Activated CD4-positive, alpha-beta memory T cell treated with anti-CD3 and anti-CD28 coated beads for 36 hours (primary cell): ENCODE measurements at regions of chr5 and their contacts with region 1.

Region 1: DNA sequence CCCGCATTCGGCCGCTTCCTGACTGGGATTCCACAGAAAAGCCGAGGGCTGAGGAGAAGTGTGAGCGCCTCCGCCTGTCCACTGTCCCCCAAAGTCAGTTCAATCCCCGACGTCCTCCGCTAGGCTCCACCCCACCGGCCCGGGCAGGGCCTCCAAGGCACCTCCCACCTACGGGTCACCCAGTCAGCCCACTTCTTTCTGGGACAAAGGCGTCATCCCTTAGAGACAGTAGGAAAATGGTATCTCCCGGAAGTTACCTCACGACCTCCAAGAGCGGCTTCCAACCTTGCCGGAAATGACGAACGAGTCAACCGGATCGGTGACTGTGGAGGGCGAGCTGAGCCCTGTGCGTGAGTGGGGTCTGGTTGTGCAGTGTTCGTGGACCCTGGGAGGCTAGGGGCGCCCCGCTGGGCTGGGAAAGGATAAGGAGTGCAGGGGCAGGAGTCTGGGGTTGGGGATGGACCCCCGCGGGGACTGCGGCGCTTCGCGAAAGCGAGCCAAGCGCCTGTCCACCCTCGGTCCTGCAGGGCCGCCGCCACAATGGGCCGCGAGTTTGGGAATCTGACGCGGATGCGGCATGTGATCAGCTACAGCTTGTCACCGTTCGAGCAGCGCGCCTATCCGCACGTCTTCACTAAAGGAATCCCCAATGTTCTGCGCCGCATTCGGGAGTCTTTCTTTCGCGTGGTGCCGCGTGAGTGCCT is at the starts of genes GDF9 and UQCRQ:
- DNase-seq: peak; percentile 95
- H3K4me3 Mint-ChIP-seq: peak within 1 kb of the TSS; percentile 100
- H3K27ac Mint-ChIP-seq: peak within 1 kb of the TSS; percentile 99
- H3K4me1 Mint-ChIP-seq: peaks cover 28% of the 10 kb centered on the region
- H3K27me3 Mint-ChIP-seq: no peaks in the 10 kb centered on the region
- total RNA-seq, gene GDF9: 0.43 to 0.73 TPM
- total RNA-seq, gene UQCRQ: 540 to 565 TPM

Region 2: DNA sequence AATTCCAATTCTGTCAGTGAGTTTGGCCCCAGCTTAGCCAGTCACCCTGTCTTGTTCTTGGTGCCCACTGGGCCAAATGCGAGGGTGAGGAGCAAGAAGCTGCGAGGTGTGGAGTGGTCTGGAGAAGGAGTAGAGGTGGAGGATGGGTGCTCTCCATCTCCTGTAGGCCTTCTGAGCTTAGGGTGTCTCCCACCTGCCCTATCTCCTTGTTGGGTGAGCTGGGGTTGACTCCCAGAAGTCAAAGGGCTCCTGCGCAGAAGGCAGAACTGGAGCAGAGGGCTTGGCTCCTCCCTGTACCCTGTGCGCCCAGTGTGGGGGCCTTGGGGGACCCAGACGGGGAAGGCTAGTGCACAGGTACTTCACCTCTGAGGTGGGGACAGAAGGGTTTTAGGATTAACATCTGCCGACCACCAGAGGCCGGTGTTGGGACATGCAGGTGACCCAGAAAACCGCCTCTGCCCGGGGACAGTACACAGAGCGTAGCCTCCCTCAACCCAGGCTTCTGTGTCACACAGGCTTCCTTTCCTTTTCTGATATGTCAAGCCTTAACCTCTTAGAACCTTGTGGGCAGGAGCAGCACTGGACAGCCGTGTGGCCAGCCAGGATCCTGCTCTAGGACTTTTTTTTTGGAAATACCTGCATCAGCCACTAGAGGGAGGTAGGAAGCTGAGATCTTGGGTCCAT is 340.1 kb before region 1 on chr5:
- CTCF ChIA-PET with region 1: interaction called, 5 read pairs
- POLR2A ChIA-PET with region 1: no interaction called
- intact Hi-C with region 1: loop called (anchors 5 kb)
- DNase-seq: peak; percentile 48
- H3K4me3 Mint-ChIP-seq: no peak overlapping the region
- H3K27ac Mint-ChIP-seq: no peak overlapping the region
- H3K4me1 Mint-ChIP-seq: peaks cover 38% of the 10 kb centered on the region
- H3K27me3 Mint-ChIP-seq: peaks cover 2% of the 10 kb centered on the region

Region 3: GRCh38 chr5:132777209-132778069 is 89.1 kb before region 1 on chr5 and contains the start of gene SEPTIN8:
- CTCF ChIA-PET with region 1: no interaction called
- POLR2A ChIA-PET with region 1: no interaction called
- intact Hi-C with region 1: loop called (anchors 1 kb)
- DNase-seq: peak; percentile 62
- H3K4me3 Mint-ChIP-seq: peak within 1 kb of the TSS; percentile 68
- H3K27ac Mint-ChIP-seq: no peak within 1 kb of the TSS
- H3K4me1 Mint-ChIP-seq: peaks cover 2% of the 10 kb centered on the region
- H3K27me3 Mint-ChIP-seq: peaks cover 13% of the 10 kb centered on the region
- total RNA-seq, gene SEPTIN8: 31.1 to 32.8 TPM

Region 4: DNA sequence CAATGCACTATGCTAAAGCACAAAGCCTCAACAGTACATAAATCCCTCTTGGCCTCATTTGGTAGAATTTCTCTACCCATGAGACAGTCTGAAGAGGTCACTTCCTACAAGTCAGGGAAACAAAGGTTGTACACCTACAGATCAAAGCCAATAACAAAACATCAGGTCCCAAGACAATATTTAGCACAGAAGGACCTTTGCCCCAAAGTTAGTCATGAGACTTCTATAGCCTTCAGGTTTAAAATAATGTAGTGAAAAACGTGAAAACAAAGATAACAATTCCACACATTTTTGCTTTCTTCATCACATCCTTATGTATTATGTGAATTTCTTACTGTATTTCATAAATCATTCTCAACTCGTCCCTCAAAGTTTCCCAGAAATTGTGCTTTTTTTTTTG is 81.2 kb after region 1 on chr5:
- CTCF ChIA-PET with region 1: no interaction called
- POLR2A ChIA-PET with region 1: no interaction called
- intact Hi-C with region 1: no loop called
- DNase-seq: no peak
- H3K4me3 Mint-ChIP-seq: no peak overlapping the region
- H3K27ac Mint-ChIP-seq: no peak overlapping the region
- H3K4me1 Mint-ChIP-seq: peaks cover 46% of the 10 kb centered on the region
- H3K27me3 Mint-ChIP-seq: no peaks in the 10 kb centered on the region

Region 5: DNA sequence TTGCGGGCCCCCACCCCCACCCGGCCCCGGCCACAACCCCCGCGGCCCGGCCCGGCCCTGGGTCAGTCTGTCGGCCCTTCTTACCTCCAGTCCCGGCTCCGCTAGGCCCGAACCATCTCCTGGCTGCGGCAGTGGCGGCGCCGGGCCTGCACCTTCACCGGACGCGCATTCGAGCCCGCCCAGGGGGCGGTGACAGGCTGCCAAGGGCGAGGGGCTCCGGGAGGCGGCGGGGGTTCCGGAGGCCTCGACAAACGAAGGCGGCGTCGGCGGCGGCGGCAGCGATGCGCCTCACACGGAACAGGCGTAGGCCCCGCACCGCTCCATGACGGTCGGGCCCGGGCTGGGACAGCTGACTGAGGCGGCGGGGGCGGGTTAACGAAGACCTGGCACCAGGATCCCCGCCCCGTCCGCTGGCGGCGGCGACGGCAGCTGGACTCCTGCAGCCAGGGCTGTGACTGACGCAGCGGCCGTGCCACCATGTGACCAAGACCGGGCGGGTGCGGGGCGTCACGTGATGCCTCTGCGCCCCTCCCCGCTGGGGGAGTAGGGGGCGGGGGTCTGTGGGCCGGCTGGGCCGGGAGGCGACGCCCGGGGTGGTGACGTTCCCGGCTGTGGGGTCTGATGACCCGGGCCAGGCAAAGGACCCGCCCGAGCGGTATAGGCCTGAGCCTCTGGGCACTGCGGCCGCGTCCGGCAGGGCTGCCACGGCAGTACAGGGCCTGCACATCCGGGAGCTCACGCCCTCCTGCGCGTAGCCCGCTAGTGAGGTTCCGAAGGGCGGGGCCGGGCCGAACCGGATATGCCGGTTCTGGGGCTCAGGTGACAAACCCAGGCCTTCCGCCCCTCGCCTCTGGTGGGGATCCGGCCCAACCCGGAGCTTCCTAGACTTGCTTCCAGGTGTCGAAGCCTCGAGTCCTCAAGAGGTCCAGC is 96.9 kb after region 1 on chr5 and contains the start of gene AFF4:
- CTCF ChIA-PET with region 1: no interaction called
- POLR2A ChIA-PET with region 1: interaction called, 8 read pairs
- intact Hi-C with region 1: loop called (anchors 1 kb)
- DNase-seq: peak; percentile 93
- H3K4me3 Mint-ChIP-seq: peak within 1 kb of the TSS; percentile 93
- H3K27ac Mint-ChIP-seq: peak within 1 kb of the TSS; percentile 98
- H3K4me1 Mint-ChIP-seq: peaks cover 29% of the 10 kb centered on the region
- H3K27me3 Mint-ChIP-seq: no peaks in the 10 kb centered on the region
- total RNA-seq, gene AFF4: 21.9 to 22.1 TPM

Region 6: DNA sequence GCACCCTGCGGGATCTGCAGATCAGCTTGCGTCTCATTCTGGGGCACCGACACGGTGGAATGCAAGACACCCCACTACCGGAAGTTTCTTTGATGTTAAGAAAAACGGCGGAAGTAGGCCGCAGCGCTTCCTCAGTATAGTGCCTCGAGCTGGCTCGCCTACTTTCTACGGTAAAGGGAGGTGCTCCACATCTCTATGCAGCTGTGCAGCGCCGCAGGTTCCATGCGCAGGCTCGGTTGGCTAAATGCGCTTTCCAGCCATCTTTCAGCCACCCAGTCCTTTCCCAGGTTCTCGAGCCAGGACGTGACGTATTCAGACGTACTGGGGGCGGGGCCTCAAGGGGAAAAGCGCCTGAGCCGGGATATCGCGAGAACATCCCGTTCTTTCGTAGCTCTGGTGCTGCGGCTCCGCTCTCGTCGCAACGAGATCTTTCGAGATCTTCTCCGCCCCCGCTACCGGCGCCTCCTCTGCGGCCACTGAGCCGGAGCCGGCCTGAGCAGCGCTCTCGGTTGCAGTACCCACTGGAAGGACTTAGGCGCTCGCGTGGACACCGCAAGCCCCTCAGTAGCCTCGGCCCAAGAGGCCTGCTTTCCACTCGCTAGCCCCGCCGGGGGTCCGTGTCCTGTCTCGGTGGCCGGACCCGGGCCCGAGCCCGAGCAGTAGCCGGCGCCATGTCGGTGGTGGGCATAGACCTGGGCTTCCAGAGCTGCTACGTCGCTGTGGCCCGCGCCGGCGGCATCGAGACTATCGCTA is 185.3 kb after region 1 on chr5 and contains the start of gene HSPA4:
- CTCF ChIA-PET with region 1: no interaction called
- POLR2A ChIA-PET with region 1: no interaction called
- intact Hi-C with region 1: loop called (anchors 1 kb)
- DNase-seq: peak; percentile 99
- H3K4me3 Mint-ChIP-seq: peak within 1 kb of the TSS; percentile 89
- H3K27ac Mint-ChIP-seq: peak within 1 kb of the TSS; percentile 96
- H3K4me1 Mint-ChIP-seq: peaks cover 39% of the 10 kb centered on the region
- H3K27me3 Mint-ChIP-seq: no peaks in the 10 kb centered on the region
- total RNA-seq, gene HSPA4: 221 to 236 TPM

Region 7: DNA sequence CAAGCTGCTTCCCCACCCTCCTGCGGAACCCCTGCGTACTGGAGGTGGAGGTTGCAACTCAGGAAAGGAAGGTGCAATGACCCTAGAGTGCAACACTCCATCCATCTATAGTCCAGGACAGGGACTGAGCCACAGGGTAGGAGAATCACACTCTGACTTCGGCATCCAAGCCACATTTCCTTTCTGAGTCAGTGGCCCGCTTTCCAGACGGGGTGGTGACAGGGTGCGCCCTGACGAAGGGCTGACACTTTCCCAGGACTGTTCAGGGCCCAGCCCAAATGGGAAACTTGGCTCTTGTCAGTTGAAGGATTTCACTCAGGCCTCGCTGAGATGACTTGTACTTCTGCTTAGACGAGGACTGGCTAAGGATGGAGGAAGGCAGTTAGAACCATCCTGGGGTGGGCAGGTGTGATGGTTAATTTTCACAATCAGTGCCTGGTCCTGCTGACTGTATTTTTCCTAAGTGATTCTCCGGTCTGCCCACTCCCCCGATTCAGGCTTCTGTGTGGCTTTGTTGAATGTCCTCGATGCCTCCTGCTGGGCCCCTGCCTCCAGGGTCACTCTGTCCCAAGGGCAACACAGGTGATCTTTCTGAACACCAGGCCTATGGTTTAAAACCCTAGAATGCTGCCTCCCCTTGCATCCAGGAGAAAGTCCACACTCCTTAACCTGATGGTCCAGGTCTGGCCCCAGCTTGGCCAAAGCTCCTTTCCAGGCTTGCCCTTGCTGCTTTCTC is 517.8 kb after region 1 on chr5:
- CTCF ChIA-PET with region 1: no interaction called
- POLR2A ChIA-PET with region 1: no interaction called
- intact Hi-C with region 1: no loop called
- DNase-seq: no peak
- H3K4me3 Mint-ChIP-seq: no peak overlapping the region
- H3K27ac Mint-ChIP-seq: no peak overlapping the region
- H3K4me1 Mint-ChIP-seq: peaks cover 5% of the 10 kb centered on the region
- H3K27me3 Mint-ChIP-seq: peaks cover 5% of the 10 kb centered on the region